GM12878 (cell line): ENCODE measurements at regions of chr9 and their contacts with region 1.

Region 1: GRCh38 chr9:133754187-133754586 is 16.0 kb upstream of the SARDH start:
- DNase-seq: no peak
- ATAC-seq: no peak
- H3K4me3 ChIP-seq: no peak overlapping the region
- H3K27ac ChIP-seq: no peak overlapping the region
- H3K4me1 ChIP-seq: no peaks in the 10 kb centered on the region
- H3K27me3 ChIP-seq: no peaks in the 10 kb centered on the region
- CTCF ChIP-seq: no peak
- EP300 ChIP-seq: no peak
- POLR2A ChIP-seq: no peak
- RAD21 ChIP-seq: no peak

Region 2: DNA sequence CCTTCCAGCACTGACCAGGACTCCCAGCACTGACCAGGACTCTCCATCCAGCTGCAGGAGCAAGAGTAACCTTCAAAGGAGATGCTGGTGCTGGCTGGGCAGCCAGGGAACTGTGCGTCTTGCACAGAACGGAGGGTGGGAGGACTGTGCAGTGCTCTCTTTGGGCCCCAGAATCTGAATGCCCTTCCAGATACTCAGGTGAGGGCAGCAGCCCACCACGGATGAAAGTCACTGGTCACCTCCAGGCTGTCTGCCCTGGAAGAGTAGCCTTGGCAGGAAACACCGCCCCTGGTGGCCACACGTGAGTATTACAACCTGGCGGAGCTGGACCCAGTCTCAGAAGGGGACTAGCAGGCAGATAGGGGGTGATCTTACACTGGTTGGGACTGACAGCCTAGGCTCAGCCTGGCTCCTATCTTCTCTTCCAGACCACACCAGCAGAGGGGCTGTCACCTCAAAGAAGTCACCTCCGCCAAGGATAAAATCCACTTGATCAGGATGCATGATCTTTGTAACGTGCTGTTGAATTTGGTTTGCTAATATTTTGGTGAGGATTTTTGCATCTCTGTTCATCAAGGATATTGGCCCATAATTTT is 11.2 kb before region 1 on chr9:
- CTCF ChIA-PET with region 1: interaction called, 12 read pairs
- POLR2A ChIA-PET with region 1: no interaction called
- RAD21 ChIA-PET with region 1: no interaction called
- SMC1A ChIA-PET with region 1: no interaction called
- in situ Hi-C with region 1: no loop called
- intact Hi-C with region 1: no loop called
- DNase-seq: peak; percentile 23
- ATAC-seq: peak; percentile 92
- H3K4me3 ChIP-seq: no peak overlapping the region
- H3K27ac ChIP-seq: no peak overlapping the region
- H3K4me1 ChIP-seq: no peaks in the 10 kb centered on the region
- H3K27me3 ChIP-seq: peaks cover 0 to 2% of the 10 kb centered on the region in 2 experiments; a peak in 1 of 4 replicates
- CTCF ChIP-seq: peak; percentile 97 to 99 (median 99)
- EP300 ChIP-seq: no peak
- POLR2A ChIP-seq: no peak
- RAD21 ChIP-seq: peak; percentile 63